ENCODE measurements at regions of chr17 and their contacts with region 1.

Region 1: GRCh38 chr17:60677308-60678124 is at the start of gene BCAS3:
- DNase-seq: peak; percentile 87 to 98 (median 96)
- ATAC-seq: peak; percentile 93 to 95
- H3K4me3 Mint-ChIP-seq: peak within 1 kb of the TSS; percentile 92 to 100 (median 97)
- H3K27ac Mint-ChIP-seq: peak within 1 kb of the TSS; percentile 88 to 100 (median 97)
- H3K4me1 Mint-ChIP-seq: peaks cover 11 to 29% (median 24%) of the 10 kb centered on the region in 4 donors
- H3K27me3 Mint-ChIP-seq: no peaks in the 10 kb centered on the region
- polyA plus RNA-seq, gene BCAS3: 25.7 to 32.8 (median 26.6) TPM

Region 2: DNA sequence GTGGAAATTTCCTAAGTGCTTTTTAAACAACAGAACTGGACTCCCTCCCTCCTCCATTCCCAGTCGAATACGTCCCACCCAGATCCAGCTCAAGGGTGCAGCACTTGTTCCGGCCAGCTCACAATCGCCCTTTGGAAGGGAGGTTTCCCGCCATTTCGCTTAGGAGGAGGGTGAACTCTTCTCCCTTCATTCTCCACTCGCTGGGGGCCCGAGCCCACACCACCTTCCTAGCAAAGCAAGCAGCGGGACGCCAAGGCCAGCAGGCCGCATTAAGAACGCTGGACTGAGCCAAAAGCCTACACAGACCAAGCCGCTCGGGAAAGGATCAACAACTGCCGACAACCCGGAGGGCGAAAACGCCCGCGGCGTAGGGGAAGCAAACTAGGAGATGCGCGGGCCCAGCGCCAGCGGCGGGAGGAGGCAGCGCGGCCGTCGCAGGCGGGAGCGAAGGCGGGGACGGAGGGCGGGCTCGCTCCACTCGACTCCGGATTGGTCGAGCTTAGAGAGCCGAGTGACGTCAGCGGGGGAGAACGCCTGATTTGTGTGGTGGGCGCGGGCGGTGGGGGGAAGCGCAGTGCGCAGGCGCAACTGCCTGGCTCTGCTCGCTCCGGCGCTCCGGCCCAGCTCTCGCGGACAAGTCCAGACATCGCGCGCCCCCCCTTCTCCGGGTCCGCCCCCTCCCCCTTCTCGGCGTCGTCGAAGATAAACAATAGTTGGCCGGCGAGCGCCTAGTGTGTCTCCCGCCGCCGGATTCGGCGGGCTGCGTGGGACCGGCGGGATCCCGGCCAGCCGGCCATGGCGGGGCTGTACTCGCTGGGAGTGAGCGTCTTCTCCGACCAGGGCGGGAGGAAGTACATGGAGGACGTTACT is 77.7 kb before region 1 on chr17 and contains the start of gene PPM1D:
- POLR2A ChIA-PET with region 1: interaction called, 20 read pairs
- DNase-seq: peak; percentile 95 to 99 (median 96)
- ATAC-seq: peak; percentile 91 to 93
- H3K4me3 Mint-ChIP-seq: peak within 1 kb of the TSS; percentile 94 to 99 (median 96)
- H3K27ac Mint-ChIP-seq: peak within 1 kb of the TSS; percentile 92 to 98 (median 96)
- H3K4me1 Mint-ChIP-seq: peaks cover 15 to 53% (median 38%) of the 10 kb centered on the region in 4 donors
- H3K27me3 Mint-ChIP-seq: peaks cover 0 to 2% (median 0%) of the 10 kb centered on the region in 5 donors
- polyA plus RNA-seq, gene PPM1D: 5.8 to 10.9 (median 6.0) TPM

Region 3: DNA sequence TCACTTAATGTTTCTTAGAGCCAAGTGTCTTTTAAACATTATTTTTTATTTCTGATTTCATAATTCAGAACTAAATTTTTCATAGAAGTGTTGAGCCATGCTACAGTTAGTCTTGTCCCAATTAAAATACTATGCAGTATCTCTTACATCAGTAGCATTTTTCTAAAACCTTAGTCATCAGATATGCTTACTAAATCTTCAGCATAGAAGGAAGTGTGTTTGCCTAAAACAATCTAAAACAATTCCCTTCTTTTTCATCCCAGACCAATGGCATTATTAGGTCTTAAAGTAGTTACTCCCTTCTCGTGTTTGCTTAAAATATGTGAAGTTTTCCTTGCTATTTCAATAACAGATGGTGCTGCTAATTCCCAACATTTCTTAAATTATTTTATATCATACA is 13.5 kb before region 1 on chr17:
- POLR2A ChIA-PET with region 1: interaction called, 10 read pairs
- DNase-seq: no peak
- ATAC-seq: no peak
- H3K4me3 Mint-ChIP-seq: no peak overlapping the region
- H3K27ac Mint-ChIP-seq: no peak overlapping the region
- H3K4me1 Mint-ChIP-seq: peaks cover 0 to 6% (median 4%) of the 10 kb centered on the region in 4 donors
- H3K27me3 Mint-ChIP-seq: no peaks in the 10 kb centered on the region

Region 4: GRCh38 chr17:60766778-60767190 is 89.3 kb after region 1 on chr17:
- POLR2A ChIA-PET with region 1: no interaction called
- DNase-seq: peak in 1 of 10 donors; percentile 9
- ATAC-seq: no peak
- H3K4me3 Mint-ChIP-seq: peak overlapping the region in 2 of 10 donors; percentile 8 to 29
- H3K27ac Mint-ChIP-seq: peak overlapping the region in 1 of 10 donors; percentile 73
- H3K4me1 Mint-ChIP-seq: peaks cover 24 to 50% (median 29%) of the 10 kb centered on the region in 4 donors
- H3K27me3 Mint-ChIP-seq: no peaks in the 10 kb centered on the region